Right cardiac atrium (tissue), 5 donors: ENCODE measurements at regions of chr11 and their contacts with region 1.

Region 1: GRCh38 chr11:119373921-119374631 is 7.4 kb downstream of the USP2 start:
- DNase-seq: peak; percentile 60 to 88 (median 83)
- ATAC-seq: peak in 1 of 2 donors; percentile 7
- H3K4me3 ChIP-seq: no peak overlapping the region
- H3K27ac ChIP-seq: peak overlapping the region; percentile 96
- H3K4me1 ChIP-seq: peaks cover 13% of the 10 kb centered on the region
- H3K27me3 ChIP-seq: no peaks in the 10 kb centered on the region

Region 2: DNA sequence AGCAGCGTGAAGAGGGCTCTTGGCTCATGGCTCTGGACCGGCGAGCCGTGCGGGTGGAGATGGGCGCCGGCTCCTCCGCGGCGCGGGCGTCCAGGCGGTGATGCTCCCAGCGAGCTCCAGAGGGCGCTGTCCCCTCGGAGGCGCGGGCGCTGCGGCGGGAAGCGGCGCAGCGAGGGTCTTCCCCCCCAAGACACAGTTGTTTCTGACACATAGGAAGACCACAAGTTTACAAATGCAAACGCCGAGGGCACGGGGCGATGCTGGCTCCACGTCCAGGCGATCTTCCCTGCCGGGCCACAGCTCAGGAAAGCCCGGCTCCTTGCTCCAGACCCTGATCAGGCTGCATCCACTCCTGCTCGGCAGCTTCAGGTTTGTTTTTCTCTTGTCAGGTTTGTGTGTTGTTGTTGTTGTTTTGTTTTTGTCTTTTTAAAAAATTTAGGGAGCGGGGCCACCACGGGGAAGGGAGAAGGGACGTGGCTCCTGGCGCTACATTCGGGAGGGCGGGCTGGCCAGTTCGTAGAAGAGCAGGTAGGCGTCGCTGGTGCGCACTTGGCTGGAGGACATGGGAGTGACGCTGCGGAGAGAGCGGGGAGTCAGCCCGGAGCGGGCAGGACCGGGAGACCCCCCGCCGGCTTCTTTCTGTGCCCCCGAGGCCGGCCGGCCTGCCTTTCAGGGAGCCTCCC is 17.6 kb before region 1 on chr11:
- intact Hi-C with region 1: loop called in 1 of 4 experiments (anchors 2 kb)
- DNase-seq: peak; percentile 86 to 93 (median 93)
- ATAC-seq: peak; percentile 78 to 83
- H3K4me3 ChIP-seq: peak overlapping the region; percentile 48
- H3K27ac ChIP-seq: peak overlapping the region; percentile 28
- H3K4me1 ChIP-seq: no peaks in the 10 kb centered on the region
- H3K27me3 ChIP-seq: no peaks in the 10 kb centered on the region

Region 3: GRCh38 chr11:119432484-119433357 is 58.6 kb after region 1 on chr11:
- intact Hi-C with region 1: no loop called
- DNase-seq: no peak
- ATAC-seq: peak; percentile 50 to 60
- H3K4me3 ChIP-seq: no peak overlapping the region
- H3K27ac ChIP-seq: no peak overlapping the region
- H3K4me1 ChIP-seq: peaks cover 2% of the 10 kb centered on the region
- H3K27me3 ChIP-seq: no peaks in the 10 kb centered on the region